Naive thymus-derived CD4-positive, alpha-beta T cell (primary cell): ENCODE measurements at regions of chr13 and their contacts with region 1.

Region 1: DNA sequence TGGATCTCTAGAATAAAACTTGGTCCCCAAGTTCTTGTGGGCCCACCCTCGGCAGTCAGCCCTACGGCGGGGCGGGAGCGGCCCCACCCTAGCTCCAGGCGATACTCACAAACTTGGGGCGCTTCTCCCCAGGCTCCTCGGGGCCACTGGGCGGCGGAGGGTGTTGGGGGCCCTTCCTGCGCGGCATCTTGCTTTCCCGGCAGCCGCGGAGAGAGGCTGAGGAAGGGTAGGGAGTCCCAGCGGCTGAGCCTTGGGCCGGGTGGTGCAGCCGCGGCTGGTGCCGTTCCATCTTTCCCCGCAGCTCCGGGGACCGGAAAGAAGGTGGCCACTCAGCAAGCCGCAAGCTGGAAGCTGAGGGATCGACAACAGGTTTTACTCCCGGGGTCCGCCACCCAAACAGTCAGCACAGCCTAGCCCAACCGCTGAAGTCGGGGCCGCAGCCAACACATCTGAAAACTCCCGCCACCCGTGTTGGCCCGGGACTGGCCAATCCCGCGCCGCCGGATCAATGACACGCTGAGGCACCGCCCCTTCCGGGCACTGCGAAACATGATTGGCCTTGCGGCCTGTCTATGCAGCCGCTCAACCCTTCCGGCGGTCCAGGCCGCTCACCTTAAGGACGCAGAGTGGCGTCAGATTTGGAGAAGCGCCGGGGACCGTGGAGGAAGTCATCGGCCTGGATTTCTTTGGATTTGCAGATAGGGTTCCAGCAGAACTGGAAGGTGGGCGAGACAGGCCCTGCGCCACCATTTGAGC is at the start of gene DIAPH3:
- DNase-seq: peak; percentile 84 to 93 (median 90)
- ATAC-seq: peak; percentile 100
- H3K4me3 ChIP-seq: peak within 1 kb of the TSS; percentile 92
- H3K4me3 Mint-ChIP-seq: peak within 1 kb of the TSS; percentile 92 to 98 (median 96)
- H3K27ac ChIP-seq: peak within 1 kb of the TSS; percentile 78
- H3K27ac Mint-ChIP-seq: peak within 1 kb of the TSS; percentile 84 to 96 (median 95)
- H3K4me1 ChIP-seq: no peaks in the 10 kb centered on the region
- H3K4me1 Mint-ChIP-seq: peaks cover 17 to 36% (median 29%) of the 10 kb centered on the region in 7 donors
- H3K27me3 ChIP-seq: no peaks in the 10 kb centered on the region
- H3K27me3 Mint-ChIP-seq: peaks cover 0 to 16% (median 5%) of the 10 kb centered on the region in 5 donors
- total RNA-seq, gene DIAPH3: 0.37 to 17.5 TPM in 2 of 5 experiments, not detected in the others

Region 2: GRCh38 chr13:60019119-60019993 is 144.3 kb before region 1 on chr13:
- CTCF ChIA-PET with region 1: no interaction called
- POLR2A ChIA-PET with region 1: no interaction called
- intact Hi-C with region 1: loop called in 1 of 2 experiments (anchors 1 kb)
- DNase-seq: no peak
- ATAC-seq: peak; percentile 26
- H3K4me3 ChIP-seq: no peak overlapping the region
- H3K4me3 Mint-ChIP-seq: peak overlapping the region in 1 of 10 donors; percentile 69
- H3K27ac ChIP-seq: no peak overlapping the region
- H3K27ac Mint-ChIP-seq: peak overlapping the region in 1 of 9 donors; percentile 84
- H3K4me1 ChIP-seq: no peaks in the 10 kb centered on the region
- H3K4me1 Mint-ChIP-seq: peaks cover 0 to 45% (median 9%) of the 10 kb centered on the region in 7 donors
- H3K27me3 ChIP-seq: no peaks in the 10 kb centered on the region
- H3K27me3 Mint-ChIP-seq: no peaks in the 10 kb centered on the region

Region 3: DNA sequence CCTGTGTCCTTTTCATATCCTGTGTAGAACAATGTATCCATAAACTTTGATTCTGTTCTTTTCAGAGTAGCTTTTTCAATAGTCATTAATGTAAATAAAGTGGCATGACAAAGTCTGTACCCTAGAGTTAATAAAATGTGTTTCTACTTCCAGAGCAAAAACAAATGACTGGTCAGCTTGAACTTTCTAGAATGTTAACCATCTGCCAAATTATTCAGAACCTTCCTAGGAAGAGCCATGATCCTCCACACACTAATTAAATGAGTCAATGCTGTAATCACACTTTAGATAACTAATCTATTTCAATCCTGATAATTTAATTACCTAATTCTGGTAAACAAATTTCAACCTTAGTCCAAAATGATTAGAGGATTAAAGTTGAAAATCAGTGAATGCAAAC is 73.1 kb before region 1 on chr13:
- CTCF ChIA-PET with region 1: no interaction called
- POLR2A ChIA-PET with region 1: no interaction called
- intact Hi-C with region 1: loop called in 1 of 2 experiments (anchors 5 kb)
- DNase-seq: no peak
- ATAC-seq: no peak
- H3K4me3 ChIP-seq: no peak overlapping the region
- H3K4me3 Mint-ChIP-seq: no peak overlapping the region
- H3K27ac ChIP-seq: no peak overlapping the region
- H3K27ac Mint-ChIP-seq: no peak overlapping the region
- H3K4me1 ChIP-seq: no peaks in the 10 kb centered on the region
- H3K4me1 Mint-ChIP-seq: peaks cover 0 to 3% (median 0%) of the 10 kb centered on the region in 7 donors
- H3K27me3 ChIP-seq: no peaks in the 10 kb centered on the region
- H3K27me3 Mint-ChIP-seq: no peaks in the 10 kb centered on the region

Region 4: DNA sequence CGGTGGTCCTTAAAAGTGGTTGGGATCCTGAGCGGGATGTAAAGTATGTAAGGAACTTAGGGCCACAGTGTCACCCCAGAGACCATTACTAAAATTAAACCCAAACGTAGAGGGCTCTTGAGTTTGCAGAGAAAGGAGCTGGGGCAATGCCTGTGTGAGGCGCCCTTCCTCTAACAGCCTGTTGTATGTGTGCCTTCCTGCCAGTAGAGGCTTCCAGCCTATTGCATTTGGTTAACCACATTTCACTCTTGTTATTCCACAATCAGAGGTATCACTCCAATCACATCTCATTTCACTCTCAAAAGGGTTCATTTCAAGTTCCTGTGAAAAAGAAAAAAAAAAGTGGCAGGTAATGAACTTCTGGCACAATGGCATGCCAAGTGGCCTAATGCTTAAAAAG is 29.3 kb before region 1 on chr13:
- CTCF ChIA-PET with region 1: no interaction called
- POLR2A ChIA-PET with region 1: no interaction called
- intact Hi-C with region 1: no loop called
- DNase-seq: no peak
- ATAC-seq: no peak
- H3K4me3 ChIP-seq: no peak overlapping the region
- H3K4me3 Mint-ChIP-seq: peak overlapping the region in 1 of 10 donors; percentile 18
- H3K27ac ChIP-seq: no peak overlapping the region
- H3K27ac Mint-ChIP-seq: peak overlapping the region in 1 of 9 donors; percentile 48
- H3K4me1 ChIP-seq: peaks cover 0 to 6% of the 10 kb centered on the region in 2 donors
- H3K4me1 Mint-ChIP-seq: peaks cover 0 to 21% (median 0%) of the 10 kb centered on the region in 7 donors
- H3K27me3 ChIP-seq: no peaks in the 10 kb centered on the region
- H3K27me3 Mint-ChIP-seq: no peaks in the 10 kb centered on the region

Region 5: GRCh38 chr13:60267498-60268198 is 104.0 kb after region 1 on chr13:
- CTCF ChIA-PET with region 1: no interaction called
- POLR2A ChIA-PET with region 1: no interaction called
- intact Hi-C with region 1: loop called in 1 of 2 experiments (anchors 5 kb)
- DNase-seq: peak in 6 of 9 donors; percentile 5 to 26 (median 14)
- ATAC-seq: peak; percentile 58
- H3K4me3 ChIP-seq: peak overlapping the region; percentile 79
- H3K4me3 Mint-ChIP-seq: no peak overlapping the region
- H3K27ac ChIP-seq: peak overlapping the region; percentile 49
- H3K27ac Mint-ChIP-seq: no peak overlapping the region
- H3K4me1 ChIP-seq: no peaks in the 10 kb centered on the region
- H3K4me1 Mint-ChIP-seq: peaks cover 0 to 3% (median 0%) of the 10 kb centered on the region in 7 donors
- H3K27me3 ChIP-seq: no peaks in the 10 kb centered on the region
- H3K27me3 Mint-ChIP-seq: peaks cover 5 to 13% (median 11%) of the 10 kb centered on the region in 5 donors

Region 6: GRCh38 chr13:60396783-60397703 is 233.4 kb after region 1 on chr13 and contains the start of gene TDRD3:
- CTCF ChIA-PET with region 1: interaction called, 3 read pairs
- POLR2A ChIA-PET with region 1: interaction called, 6 read pairs
- intact Hi-C with region 1: loop called (anchors 1 kb)
- DNase-seq: peak; percentile 71 to 86 (median 82)
- ATAC-seq: peak; percentile 82
- H3K4me3 ChIP-seq: peak within 1 kb of the TSS; percentile 85
- H3K4me3 Mint-ChIP-seq: peak within 1 kb of the TSS; percentile 88 to 98 (median 95)
- H3K27ac ChIP-seq: peak within 1 kb of the TSS; percentile 80
- H3K27ac Mint-ChIP-seq: peak within 1 kb of the TSS; percentile 91 to 99 (median 96)
- H3K4me1 ChIP-seq: peaks cover 15 to 20% of the 10 kb centered on the region in 2 donors
- H3K4me1 Mint-ChIP-seq: peaks cover 25 to 54% (median 44%) of the 10 kb centered on the region in 7 donors
- H3K27me3 ChIP-seq: no peaks in the 10 kb centered on the region
- H3K27me3 Mint-ChIP-seq: no peaks in the 10 kb centered on the region
- total RNA-seq, gene TDRD3: 24.7 to 33.6 (median 27.2) TPM